Naive thymus-derived CD4-positive, alpha-beta T cell (primary cell): ENCODE measurements at regions of chr7 and their contacts with region 1.

Region 1: GRCh38 chr7:2555121-2556052 is at the start of gene BRAT1:
- DNase-seq: peak; percentile 84 to 95 (median 92)
- ATAC-seq: peak; percentile 95
- H3K4me3 ChIP-seq: peak within 1 kb of the TSS; percentile 77
- H3K4me3 Mint-ChIP-seq: peak within 1 kb of the TSS; percentile 77 to 92 (median 88)
- H3K27ac ChIP-seq: peak within 1 kb of the TSS; percentile 100
- H3K27ac Mint-ChIP-seq: peak within 1 kb of the TSS; percentile 48 to 93 (median 85)
- H3K4me1 ChIP-seq: peaks cover 15 to 22% of the 10 kb centered on the region in 2 donors
- H3K4me1 Mint-ChIP-seq: peaks cover 22 to 50% (median 36%) of the 10 kb centered on the region in 7 donors
- H3K27me3 ChIP-seq: no peaks in the 10 kb centered on the region
- H3K27me3 Mint-ChIP-seq: no peaks in the 10 kb centered on the region
- total RNA-seq, gene BRAT1: 24.6 to 45.5 (median 37.0) TPM

Region 2: GRCh38 chr7:1569833-1570633 is 985.4 kb before region 1 on chr7 and contains the start of gene PSMG3:
- CTCF ChIA-PET with region 1: no interaction called
- POLR2A ChIA-PET with region 1: no interaction called
- intact Hi-C with region 1: loop called in 1 of 2 experiments (anchors 5 kb)
- DNase-seq: peak; percentile 72 to 91 (median 84)
- ATAC-seq: peak; percentile 94
- H3K4me3 ChIP-seq: peak within 1 kb of the TSS; percentile 90
- H3K4me3 Mint-ChIP-seq: peak within 1 kb of the TSS; percentile 77 to 91 (median 86)
- H3K27ac ChIP-seq: peak within 1 kb of the TSS; percentile 95
- H3K27ac Mint-ChIP-seq: peak within 1 kb of the TSS; percentile 81 to 93 (median 88)
- H3K4me1 ChIP-seq: peaks cover 3 to 16% of the 10 kb centered on the region in 2 donors
- H3K4me1 Mint-ChIP-seq: peaks cover 14 to 36% (median 26%) of the 10 kb centered on the region in 7 donors
- H3K27me3 ChIP-seq: no peaks in the 10 kb centered on the region
- H3K27me3 Mint-ChIP-seq: no peaks in the 10 kb centered on the region
- total RNA-seq, gene PSMG3: 12.1 to 31.8 (median 23.2) TPM

Region 3: GRCh38 chr7:2309889-2310331 is 245.5 kb before region 1 on chr7:
- CTCF ChIA-PET with region 1: no interaction called
- POLR2A ChIA-PET with region 1: no interaction called
- intact Hi-C with region 1: no loop called
- DNase-seq: no peak
- ATAC-seq: no peak
- H3K4me3 ChIP-seq: no peak overlapping the region
- H3K4me3 Mint-ChIP-seq: no peak overlapping the region
- H3K27ac ChIP-seq: no peak overlapping the region
- H3K27ac Mint-ChIP-seq: no peak overlapping the region
- H3K4me1 ChIP-seq: no peaks in the 10 kb centered on the region
- H3K4me1 Mint-ChIP-seq: peaks cover 0 to 19% (median 15%) of the 10 kb centered on the region in 7 donors
- H3K27me3 ChIP-seq: no peaks in the 10 kb centered on the region
- H3K27me3 Mint-ChIP-seq: no peaks in the 10 kb centered on the region

Region 4: GRCh38 chr7:2354186-2354938 is 201.0 kb before region 1 on chr7 and contains the start of gene EIF3B:
- CTCF ChIA-PET with region 1: no interaction called
- POLR2A ChIA-PET with region 1: no interaction called
- intact Hi-C with region 1: loop called (anchors 1 kb)
- DNase-seq: peak; percentile 87 to 97 (median 94)
- ATAC-seq: peak; percentile 90
- H3K4me3 ChIP-seq: peak within 1 kb of the TSS; percentile 89
- H3K4me3 Mint-ChIP-seq: peak within 1 kb of the TSS; percentile 90 to 100 (median 94)
- H3K27ac ChIP-seq: peak within 1 kb of the TSS; percentile 97
- H3K27ac Mint-ChIP-seq: peak within 1 kb of the TSS; percentile 98 to 100 (median 100)
- H3K4me1 ChIP-seq: peaks cover 25 to 38% of the 10 kb centered on the region in 2 donors
- H3K4me1 Mint-ChIP-seq: peaks cover 16 to 48% (median 31%) of the 10 kb centered on the region in 7 donors
- H3K27me3 ChIP-seq: no peaks in the 10 kb centered on the region
- H3K27me3 Mint-ChIP-seq: peaks cover 0 to 3% (median 0%) of the 10 kb centered on the region in 5 donors
- total RNA-seq, gene EIF3B: 127 to 189 (median 158) TPM

Region 5: DNA sequence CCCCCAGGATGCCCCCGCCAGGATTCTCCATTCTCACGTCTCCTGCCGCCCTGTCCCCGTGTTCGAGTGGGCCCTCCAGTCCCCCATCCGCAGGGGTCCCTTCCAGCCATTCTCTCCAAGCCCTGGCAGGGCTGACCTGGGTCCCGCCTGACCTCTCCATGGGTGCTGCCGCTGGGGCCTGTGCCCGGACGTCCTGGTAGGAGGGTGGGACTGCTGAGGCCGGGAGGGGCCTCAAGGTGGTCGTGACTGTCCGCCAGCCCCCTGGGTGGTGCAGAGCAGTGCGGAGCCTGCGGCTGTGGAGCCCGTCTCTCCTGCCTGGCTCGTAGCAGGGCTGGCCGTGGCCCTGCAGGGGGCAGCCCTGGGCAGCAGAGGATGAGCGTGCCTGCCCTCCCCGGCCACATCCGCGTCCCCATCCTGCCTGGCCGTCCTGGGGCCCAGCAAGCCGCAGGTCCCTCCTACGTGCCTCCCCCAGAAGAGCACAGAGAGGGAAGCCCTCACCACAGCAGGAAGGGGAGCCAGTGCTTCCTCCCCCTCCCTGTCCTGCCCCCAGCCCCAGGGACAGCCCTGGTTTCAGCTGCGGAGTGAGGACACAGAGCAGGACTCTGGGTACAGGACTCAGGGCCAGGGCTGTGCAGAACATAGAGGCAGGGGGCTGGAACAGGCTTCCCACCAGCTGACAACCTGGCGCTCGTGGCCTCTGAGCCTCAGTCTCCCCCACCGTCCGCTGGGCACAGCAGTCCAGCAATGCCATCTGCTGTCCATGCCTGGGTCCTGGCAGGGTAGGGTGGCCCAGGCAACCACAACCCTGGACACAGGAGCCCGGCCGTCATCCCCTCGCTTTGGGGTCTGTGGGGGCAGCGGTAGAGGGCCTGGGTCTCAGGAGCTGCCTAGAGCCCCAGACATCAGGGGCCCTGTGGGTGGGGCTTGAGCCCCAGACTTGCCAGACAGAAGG is 77.7 kb before region 1 on chr7:
- CTCF ChIA-PET with region 1: no interaction called
- POLR2A ChIA-PET with region 1: no interaction called
- intact Hi-C with region 1: loop called in 1 of 2 experiments (anchors 5 kb)
- DNase-seq: peak; percentile 30 to 75 (median 61)
- ATAC-seq: peak; percentile 94
- H3K4me3 ChIP-seq: no peak overlapping the region
- H3K4me3 Mint-ChIP-seq: peak overlapping the region in 1 of 10 donors; percentile 38
- H3K27ac ChIP-seq: no peak overlapping the region
- H3K27ac Mint-ChIP-seq: peak overlapping the region in 1 of 9 donors; percentile 33
- H3K4me1 ChIP-seq: peaks cover 7 to 13% of the 10 kb centered on the region in 2 donors
- H3K4me1 Mint-ChIP-seq: peaks cover 0 to 10% (median 0%) of the 10 kb centered on the region in 7 donors
- H3K27me3 ChIP-seq: no peaks in the 10 kb centered on the region
- H3K27me3 Mint-ChIP-seq: peaks cover 0 to 3% (median 0%) of the 10 kb centered on the region in 5 donors

Region 6: DNA sequence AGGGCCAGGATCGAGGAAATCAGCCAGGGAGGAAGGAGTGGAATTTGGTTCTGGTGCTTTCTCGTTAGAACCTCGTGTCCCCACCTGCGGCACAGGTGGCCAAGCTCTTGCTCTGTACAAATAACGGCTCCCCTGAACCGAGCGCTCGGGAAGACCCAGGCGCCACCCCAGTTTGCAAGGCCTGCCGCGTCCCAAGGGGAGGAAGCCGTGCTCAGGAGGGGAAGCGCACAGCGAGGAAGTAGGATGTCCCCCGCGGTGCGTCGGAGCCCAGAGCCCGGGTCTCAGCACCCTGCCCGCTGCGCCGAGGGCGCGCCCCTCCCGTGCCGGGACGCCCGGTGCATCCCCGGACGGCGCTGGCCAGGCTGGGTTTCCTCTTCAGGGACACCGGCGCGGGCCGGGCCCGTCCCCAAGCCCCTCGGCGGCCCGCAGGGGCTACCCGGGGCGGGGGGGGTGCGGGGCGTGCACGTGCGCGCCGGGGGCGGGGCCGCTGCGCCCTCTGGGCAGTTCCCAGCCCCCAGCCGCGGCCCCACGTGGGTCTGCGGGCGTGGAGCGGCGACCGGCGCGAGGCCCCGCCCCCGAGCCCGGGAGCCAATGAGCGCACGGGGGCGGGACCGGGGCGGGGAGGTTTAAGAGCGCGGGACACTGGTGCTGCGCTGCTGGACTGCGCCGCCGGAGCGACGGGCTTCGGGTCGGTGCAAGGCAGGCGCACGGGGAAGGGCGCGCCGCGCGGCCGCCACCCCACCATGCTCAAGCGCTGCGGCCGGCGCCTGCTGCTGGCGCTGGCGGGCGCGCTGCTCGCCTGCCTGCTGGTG is 36.1 kb before region 1 on chr7 and contains the start of gene LFNG:
- CTCF ChIA-PET with region 1: no interaction called
- POLR2A ChIA-PET with region 1: interaction called, 9 read pairs
- intact Hi-C with region 1: loop called (anchors 1 kb)
- DNase-seq: peak; percentile 64 to 93 (median 77)
- ATAC-seq: peak; percentile 89
- H3K4me3 ChIP-seq: peak within 1 kb of the TSS; percentile 94
- H3K4me3 Mint-ChIP-seq: peak within 1 kb of the TSS; percentile 94 to 99 (median 96)
- H3K27ac ChIP-seq: peak within 1 kb of the TSS; percentile 78
- H3K27ac Mint-ChIP-seq: peak within 1 kb of the TSS; percentile 80 to 92 (median 88)
- H3K4me1 ChIP-seq: peaks cover 20 to 25% of the 10 kb centered on the region in 2 donors
- H3K4me1 Mint-ChIP-seq: peaks cover 14 to 33% (median 30%) of the 10 kb centered on the region in 7 donors
- H3K27me3 ChIP-seq: no peaks in the 10 kb centered on the region
- H3K27me3 Mint-ChIP-seq: peaks cover 0 to 11% (median 0%) of the 10 kb centered on the region in 5 donors
- total RNA-seq, gene LFNG: 114 to 246 (median 151) TPM

Region 7: DNA sequence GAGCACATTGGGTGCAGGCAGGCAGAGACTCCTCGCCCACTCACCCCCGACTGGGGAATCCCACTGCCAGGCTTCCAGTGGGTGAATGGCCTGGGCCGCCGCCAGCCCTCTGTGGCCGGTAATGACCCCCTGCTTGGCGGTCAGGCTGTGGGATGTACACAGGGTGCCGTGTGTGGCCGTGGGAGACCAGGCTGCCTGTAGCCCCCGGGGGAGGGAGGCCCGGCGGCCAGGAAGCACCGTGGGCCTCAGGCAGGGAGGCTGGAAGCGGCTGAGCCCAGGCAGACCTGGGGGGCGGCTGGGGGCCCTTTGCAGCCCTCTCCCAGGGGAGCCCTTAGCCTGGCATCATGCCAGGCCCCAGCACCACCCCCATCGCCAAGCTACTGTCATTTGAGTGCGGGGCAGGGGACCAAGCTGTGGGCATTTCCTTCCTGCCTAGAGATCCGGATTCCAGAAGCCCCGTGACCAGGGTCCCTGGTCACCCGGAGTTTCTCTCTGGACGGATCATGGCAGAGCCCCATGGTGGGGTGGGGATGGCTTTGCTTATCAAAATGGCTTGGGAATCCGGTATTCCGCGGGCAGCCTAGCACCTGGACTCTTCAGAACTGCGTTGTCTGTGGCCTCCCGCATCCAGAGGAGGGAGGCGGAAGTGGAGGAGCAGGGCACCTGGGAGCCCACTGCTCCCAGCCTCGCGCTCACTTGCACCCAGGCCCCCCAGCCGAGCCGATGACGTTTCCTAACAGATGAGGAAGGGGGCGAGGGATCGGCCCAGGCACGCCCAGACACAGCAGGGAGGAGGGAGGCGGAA is 77.5 kb after region 1 on chr7:
- CTCF ChIA-PET with region 1: no interaction called
- POLR2A ChIA-PET with region 1: no interaction called
- intact Hi-C with region 1: loop called (anchors 1 kb)
- DNase-seq: peak in 8 of 9 donors; percentile 24 to 73 (median 37)
- ATAC-seq: no peak
- H3K4me3 ChIP-seq: peak overlapping the region; percentile 58
- H3K4me3 Mint-ChIP-seq: peak overlapping the region; percentile 86 to 96 (median 89)
- H3K27ac ChIP-seq: peak overlapping the region; percentile 79
- H3K27ac Mint-ChIP-seq: peak overlapping the region in 8 of 9 donors; percentile 72 to 88 (median 81)
- H3K4me1 ChIP-seq: peaks cover 3 to 16% of the 10 kb centered on the region in 2 donors
- H3K4me1 Mint-ChIP-seq: peaks cover 0 to 19% (median 15%) of the 10 kb centered on the region in 7 donors
- H3K27me3 ChIP-seq: no peaks in the 10 kb centered on the region
- H3K27me3 Mint-ChIP-seq: peaks cover 0 to 4% (median 0%) of the 10 kb centered on the region in 5 donors